Endothelial cell of umbilical vein (primary cell): ENCODE measurements at regions of chr16 and their contacts with region 1.

Region 1: GRCh38 chr16:3264137-3265036 is 8.0 kb upstream of the MEFV start:
- DNase-seq: peak; percentile 98
- H3K4me3 ChIP-seq: peak overlapping the region; percentile 69 to 84 (median 78)
- H3K27ac ChIP-seq: peak overlapping the region; percentile 67
- H3K4me1 ChIP-seq: peaks cover 3% of the 10 kb centered on the region
- H3K27me3 ChIP-seq: no peaks in the 10 kb centered on the region
- CTCF ChIP-seq: peak in 1 of 2 donors; percentile 16
- POLR2A ChIP-seq: peak; percentile 92

Region 2: GRCh38 chr16:3234543-3235541 is 29.5 kb before region 1 on chr16 and contains the start of gene ZNF200:
- CTCF ChIA-PET with region 1: interaction called, 4 read pairs
- POLR2A ChIA-PET with region 1: no interaction called
- dilution Hi-C with region 1: no loop called
- intact Hi-C with region 1: loop called (anchors 1 kb)
- DNase-seq: peak; percentile 96
- H3K4me3 ChIP-seq: peak within 1 kb of the TSS; percentile 49 to 58 (median 55)
- H3K27ac ChIP-seq: peak within 1 kb of the TSS; percentile 79
- H3K4me1 ChIP-seq: peaks cover 13% of the 10 kb centered on the region
- H3K27me3 ChIP-seq: no peaks in the 10 kb centered on the region
- CTCF ChIP-seq: no peak
- POLR2A ChIP-seq: peak; percentile 65
- total RNA-seq, gene ZNF200: 9.1 and 10.0 TPM in 2 replicates

Region 3: GRCh38 chr16:3282730-3283524 is 18.5 kb after region 1 on chr16 and contains the start of gene ZNF263:
- CTCF ChIA-PET with region 1: interaction called, 28 read pairs
- POLR2A ChIA-PET with region 1: no interaction called
- dilution Hi-C with region 1: no loop called
- intact Hi-C with region 1: loop called (anchors 1 kb)
- DNase-seq: peak; percentile 98
- H3K4me3 ChIP-seq: peak within 1 kb of the TSS; percentile 74 to 79 (median 77)
- H3K27ac ChIP-seq: peak within 1 kb of the TSS; percentile 92
- H3K4me1 ChIP-seq: peaks cover 13% of the 10 kb centered on the region
- H3K27me3 ChIP-seq: peaks cover 2 to 6% of the 10 kb centered on the region in 2 experiments
- CTCF ChIP-seq: no peak
- POLR2A ChIP-seq: peak; percentile 75
- total RNA-seq, gene ZNF263: 20.8 and 22.7 TPM in 2 replicates

Region 4: GRCh38 chr16:3400779-3401688 is 136.6 kb after region 1 on chr16 and contains the starts of genes ZNF174 and ZSCAN32:
- CTCF ChIA-PET with region 1: no interaction called
- POLR2A ChIA-PET with region 1: no interaction called
- dilution Hi-C with region 1: no loop called
- intact Hi-C with region 1: loop called (anchors 1 kb)
- DNase-seq: peak; percentile 100
- H3K4me3 ChIP-seq: peak within 1 kb of the TSS; percentile 66 to 87 (median 82)
- H3K27ac ChIP-seq: peak within 1 kb of the TSS; percentile 42
- H3K4me1 ChIP-seq: peaks cover 13% of the 10 kb centered on the region
- H3K27me3 ChIP-seq: no peaks in the 10 kb centered on the region
- CTCF ChIP-seq: peak in 1 of 2 donors; percentile 1
- POLR2A ChIP-seq: peak; percentile 94
- total RNA-seq, gene ZNF174: 7.4 and 9.1 TPM in 2 replicates
- total RNA-seq, gene ZSCAN32: 10.9 and 13.1 TPM in 2 replicates

Region 5: DNA sequence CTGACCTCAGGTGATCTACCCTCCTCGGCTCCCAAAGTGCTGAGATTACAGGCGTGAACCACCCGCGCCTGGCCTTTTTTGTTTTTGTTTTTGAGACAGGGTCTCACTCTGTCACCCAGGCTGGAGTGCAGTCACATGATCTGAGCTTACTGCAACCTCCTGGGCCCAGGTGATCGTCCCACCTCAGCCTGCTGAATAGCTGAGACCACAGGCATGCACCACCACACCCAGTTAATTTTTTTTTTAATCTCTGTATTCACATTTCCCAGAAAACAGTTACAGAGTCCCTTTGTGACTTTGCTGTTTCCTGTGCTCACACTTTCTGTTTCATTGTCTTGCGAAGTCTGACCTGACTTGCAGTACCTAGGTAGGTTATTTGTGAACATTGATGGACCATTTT is 239.1 kb after region 1 on chr16:
- CTCF ChIA-PET with region 1: interaction called, 12 read pairs
- POLR2A ChIA-PET with region 1: no interaction called
- dilution Hi-C with region 1: no loop called
- intact Hi-C with region 1: loop called (anchors 1 kb)
- DNase-seq: no peak
- H3K4me3 ChIP-seq: no peak overlapping the region
- H3K27ac ChIP-seq: no peak overlapping the region
- H3K4me1 ChIP-seq: peaks cover 5% of the 10 kb centered on the region
- H3K27me3 ChIP-seq: no peaks in the 10 kb centered on the region
- CTCF ChIP-seq: no peak
- POLR2A ChIP-seq: no peak